ENCODE measurements at regions of chr3 and their contacts with region 1.

Region 1: DNA sequence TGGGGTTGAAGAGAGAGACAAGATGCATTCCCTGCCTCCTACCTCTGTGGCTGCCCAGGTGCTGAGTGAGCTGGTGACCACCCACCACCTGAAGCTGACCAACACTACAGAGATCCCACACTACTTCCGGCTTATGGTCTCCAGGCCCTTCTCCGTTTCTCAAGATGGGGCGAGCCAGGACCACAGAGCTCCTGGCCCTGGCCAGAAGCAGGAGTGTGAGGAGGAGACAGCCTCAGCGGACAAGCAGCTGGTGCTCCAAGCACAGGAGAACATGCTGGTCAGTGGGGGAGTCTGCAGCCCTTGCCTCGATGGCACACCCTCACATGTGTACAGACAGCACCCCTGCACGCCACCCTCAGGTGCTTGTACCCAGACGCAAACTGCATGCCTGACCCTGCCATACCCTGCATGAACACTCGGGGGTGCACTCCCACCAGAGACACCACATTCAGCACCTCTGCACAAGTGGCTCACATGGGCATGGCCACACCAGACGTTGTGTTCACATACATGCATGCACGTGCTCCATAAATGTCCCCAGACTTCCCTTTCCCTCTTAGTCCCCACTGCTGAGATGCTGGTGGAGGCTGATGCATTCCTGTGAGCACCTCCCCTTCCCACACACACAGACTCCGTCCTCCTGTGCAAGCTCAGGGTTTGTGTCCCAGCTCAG is 19.0 kb downstream of the ACAA1 start:
- DNase-seq: peak; percentile 75
- ATAC-seq: peak; percentile 64

Region 2: GRCh38 chr3:38138349-38139190 is 20.7 kb after region 1 on chr3 and contains the start of gene MYD88:
- intact Hi-C with region 1: no loop called
- DNase-seq: peak; percentile 91
- ATAC-seq: peak; percentile 65
- total RNA-seq, gene MYD88: 25.0 TPM

Region 3: GRCh38 chr3:38479431-38480092 is 361.7 kb after region 1 on chr3:
- intact Hi-C with region 1: loop called (anchors 10 kb)
- DNase-seq: peak; percentile 72
- ATAC-seq: peak; percentile 79